CD8-positive, alpha-beta T cell (primary cell): ENCODE measurements at regions of chr5 and their contacts with region 1.

Region 1: GRCh38 chr5:140244525-140245025 is 58.3 kb downstream of the PFDN1 start:
- DNase-seq: peak; percentile 43 to 78 (median 75)
- ATAC-seq: peak; percentile 76
- H3K4me3 ChIP-seq: no peak overlapping the region
- H3K4me3 Mint-ChIP-seq: no peak overlapping the region
- H3K27ac ChIP-seq: no peak overlapping the region
- H3K27ac Mint-ChIP-seq: peak overlapping the region; percentile 20
- H3K4me1 ChIP-seq: peaks cover 10% of the 10 kb centered on the region
- H3K4me1 Mint-ChIP-seq: peaks cover 12% of the 10 kb centered on the region
- H3K27me3 ChIP-seq: no peaks in the 10 kb centered on the region
- H3K27me3 Mint-ChIP-seq: no peaks in the 10 kb centered on the region
- CTCF ChIP-seq: peak; percentile 73

Region 2: GRCh38 chr5:140174465-140175366 is 69.9 kb before region 1 on chr5 and contains the start of gene CYSTM1:
- CTCF ChIA-PET with region 1: no interaction called
- POLR2A ChIA-PET with region 1: no interaction called
- intact Hi-C with region 1: no loop called
- DNase-seq: peak; percentile 92 to 98 (median 96)
- ATAC-seq: peak; percentile 83
- H3K4me3 ChIP-seq: peak within 1 kb of the TSS; percentile 68 to 83
- H3K4me3 Mint-ChIP-seq: peak within 1 kb of the TSS; percentile 91
- H3K27ac ChIP-seq: peak within 1 kb of the TSS; percentile 79 to 88
- H3K27ac Mint-ChIP-seq: peak within 1 kb of the TSS; percentile 95
- H3K4me1 ChIP-seq: peaks cover 9% of the 10 kb centered on the region
- H3K4me1 Mint-ChIP-seq: peaks cover 13% of the 10 kb centered on the region
- H3K27me3 ChIP-seq: peaks cover 0 to 2% of the 10 kb centered on the region in 2 experiments
- H3K27me3 Mint-ChIP-seq: peaks cover 5% of the 10 kb centered on the region
- CTCF ChIP-seq: no peak
- total RNA-seq, gene CYSTM1: 8.1 to 8.6 TPM

Region 3: DNA sequence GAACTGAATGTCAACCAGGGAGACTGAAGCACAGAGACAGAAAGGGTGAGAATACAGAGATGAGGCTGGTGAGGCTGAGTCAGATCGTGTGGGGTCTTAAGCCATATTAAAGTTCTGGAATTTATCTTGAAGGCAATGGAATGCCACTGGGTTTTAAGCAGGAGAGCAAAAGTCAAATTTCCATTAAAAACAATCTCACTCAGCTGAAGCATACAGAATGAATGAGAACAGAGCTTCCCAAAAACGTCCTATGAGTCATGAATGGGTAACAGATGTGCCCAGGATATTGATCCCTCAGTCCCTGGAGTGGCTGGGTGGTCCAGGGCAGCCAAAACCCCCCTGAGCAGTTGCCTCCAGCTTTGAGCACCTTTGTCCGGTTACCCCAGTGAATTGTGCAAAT is 13.4 kb after region 1 on chr5:
- CTCF ChIA-PET with region 1: interaction called, 15 read pairs
- POLR2A ChIA-PET with region 1: no interaction called
- intact Hi-C with region 1: no loop called
- DNase-seq: no peak
- ATAC-seq: no peak
- H3K4me3 ChIP-seq: no peak overlapping the region
- H3K4me3 Mint-ChIP-seq: no peak overlapping the region
- H3K27ac ChIP-seq: no peak overlapping the region
- H3K27ac Mint-ChIP-seq: no peak overlapping the region
- H3K4me1 ChIP-seq: no peaks in the 10 kb centered on the region
- H3K4me1 Mint-ChIP-seq: peaks cover 30% of the 10 kb centered on the region
- H3K27me3 ChIP-seq: no peaks in the 10 kb centered on the region
- H3K27me3 Mint-ChIP-seq: no peaks in the 10 kb centered on the region
- CTCF ChIP-seq: no peak

Region 4: DNA sequence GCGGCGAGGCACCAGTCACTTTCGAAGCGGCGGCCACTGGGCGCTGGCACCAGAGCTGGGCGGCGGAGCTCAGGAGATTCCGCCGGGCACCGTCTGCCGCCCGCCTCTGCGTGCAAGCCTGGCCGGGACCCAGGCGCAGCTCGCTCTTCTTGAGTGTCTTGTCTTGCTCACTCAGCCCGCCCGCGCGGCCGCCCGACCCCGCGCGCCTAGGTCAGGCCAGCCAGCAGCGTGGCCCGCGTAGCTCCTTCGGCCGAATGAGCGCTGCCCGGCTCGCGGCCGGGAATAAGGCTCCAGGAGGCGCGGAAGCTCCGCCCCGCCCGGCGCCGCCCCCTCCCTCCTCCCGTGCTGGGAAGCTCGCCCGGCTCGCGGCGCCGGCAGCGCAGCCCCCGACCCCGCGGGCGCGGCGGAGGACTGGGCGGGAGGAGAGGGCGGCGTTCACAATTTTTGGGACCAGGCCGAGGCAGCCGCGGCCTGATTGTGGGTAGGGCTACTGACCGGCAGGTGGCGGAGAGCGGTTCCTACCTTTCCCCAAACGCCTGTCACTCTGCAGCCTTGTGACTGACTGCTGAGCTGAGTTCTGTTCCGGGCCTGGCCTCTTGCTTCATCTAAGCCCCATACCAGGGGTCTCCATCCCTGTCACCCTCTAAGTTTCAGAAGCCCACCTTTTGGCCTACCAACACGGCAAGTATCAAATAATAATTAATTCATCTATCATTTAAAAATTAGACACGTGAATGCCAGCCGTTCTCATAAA is 102.0 kb after region 1 on chr5 and contains the start of gene HBEGF:
- CTCF ChIA-PET with region 1: interaction called, 337 read pairs
- POLR2A ChIA-PET with region 1: interaction called, 4 read pairs
- intact Hi-C with region 1: loop called (anchors 1 kb)
- DNase-seq: peak in 8 of 9 experiments; percentile 21 to 66 (median 50)
- ATAC-seq: peak; percentile 73
- H3K4me3 ChIP-seq: peak within 1 kb of the TSS; percentile 48 to 50
- H3K4me3 Mint-ChIP-seq: peak within 1 kb of the TSS; percentile 72
- H3K27ac ChIP-seq: no peak within 1 kb of the TSS
- H3K27ac Mint-ChIP-seq: no peak within 1 kb of the TSS
- H3K4me1 ChIP-seq: peaks cover 23% of the 10 kb centered on the region
- H3K4me1 Mint-ChIP-seq: peaks cover 33% of the 10 kb centered on the region
- H3K27me3 ChIP-seq: peaks cover 0 to 13% of the 10 kb centered on the region in 2 experiments
- H3K27me3 Mint-ChIP-seq: peaks cover 27% of the 10 kb centered on the region
- CTCF ChIP-seq: peak; percentile 41
- total RNA-seq, gene HBEGF: 0.30 to 0.50 TPM

Region 5: DNA sequence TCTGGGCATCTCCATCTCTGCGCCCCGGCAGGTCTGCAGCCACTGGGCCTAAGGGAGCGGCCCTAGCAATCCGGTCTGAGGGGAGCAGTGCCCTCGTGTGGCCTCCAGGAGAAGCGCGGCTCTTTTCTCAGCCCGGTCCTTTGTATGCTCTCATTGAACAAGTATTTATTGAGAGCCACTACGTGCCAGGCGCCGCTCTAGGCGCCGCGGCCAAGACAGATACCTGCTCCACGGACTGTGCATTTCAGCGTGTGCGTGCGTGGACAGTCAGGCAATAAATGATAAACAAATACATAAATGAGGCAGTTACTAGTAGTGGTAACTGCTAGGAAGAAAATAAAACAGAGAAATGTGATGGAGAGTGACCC is 113.1 kb after region 1 on chr5:
- CTCF ChIA-PET with region 1: interaction called, 337 read pairs
- POLR2A ChIA-PET with region 1: no interaction called
- intact Hi-C with region 1: loop called in 1 of 2 experiments (anchors 1 kb)
- DNase-seq: peak; percentile 55 to 83 (median 67)
- ATAC-seq: peak; percentile 99
- H3K4me3 ChIP-seq: peak overlapping the region in 1 of 2 experiments; percentile 20
- H3K4me3 Mint-ChIP-seq: peak overlapping the region; percentile 64
- H3K27ac ChIP-seq: no peak overlapping the region
- H3K27ac Mint-ChIP-seq: no peak overlapping the region
- H3K4me1 ChIP-seq: peaks cover 9% of the 10 kb centered on the region
- H3K4me1 Mint-ChIP-seq: peaks cover 7% of the 10 kb centered on the region
- H3K27me3 ChIP-seq: no peaks in the 10 kb centered on the region
- H3K27me3 Mint-ChIP-seq: peaks cover 11% of the 10 kb centered on the region
- CTCF ChIP-seq: peak; percentile 77

Region 6: DNA sequence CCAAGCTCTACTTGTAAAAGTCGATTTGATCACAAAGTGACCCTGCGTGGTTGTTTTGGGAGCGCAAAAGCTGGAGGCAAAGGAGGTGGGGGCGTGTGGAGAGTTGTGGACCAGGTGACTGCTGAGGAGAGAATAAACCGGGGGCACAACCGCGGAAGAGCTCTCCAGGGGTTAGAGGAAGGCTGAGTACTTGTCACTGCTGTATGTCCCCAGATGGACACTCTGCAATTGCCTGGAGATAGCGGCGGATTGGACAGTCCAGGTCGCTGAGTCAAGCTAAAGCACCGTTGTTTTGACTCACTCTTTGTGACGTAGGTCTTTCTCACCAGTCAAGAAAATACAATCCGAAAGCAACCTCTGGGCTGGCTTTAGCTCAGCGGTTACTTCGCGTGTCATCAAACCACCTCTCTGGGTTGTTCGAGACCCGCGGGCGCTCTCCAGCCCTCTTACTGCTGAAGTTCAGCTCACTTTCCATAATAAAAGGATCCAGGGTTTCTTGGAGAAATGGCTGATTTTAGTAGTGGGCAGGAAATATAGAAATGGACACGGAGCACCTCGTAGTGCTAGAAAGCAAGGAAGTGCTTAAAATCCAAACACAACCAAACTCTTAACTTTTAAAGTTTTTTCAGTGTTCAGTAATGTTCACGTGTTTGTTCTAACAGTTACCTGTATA is 481.4 kb after region 1 on chr5:
- CTCF ChIA-PET with region 1: interaction called, 4 read pairs
- POLR2A ChIA-PET with region 1: no interaction called
- intact Hi-C with region 1: loop called in 1 of 2 experiments (anchors 2 kb)
- DNase-seq: peak; percentile 28 to 80 (median 61)
- ATAC-seq: peak; percentile 92
- H3K4me3 ChIP-seq: peak overlapping the region in 1 of 2 experiments; percentile 17
- H3K4me3 Mint-ChIP-seq: peak overlapping the region; percentile 80
- H3K27ac ChIP-seq: no peak overlapping the region
- H3K27ac Mint-ChIP-seq: peak overlapping the region; percentile 83
- H3K4me1 ChIP-seq: no peaks in the 10 kb centered on the region
- H3K4me1 Mint-ChIP-seq: peaks cover 12% of the 10 kb centered on the region
- H3K27me3 ChIP-seq: no peaks in the 10 kb centered on the region
- H3K27me3 Mint-ChIP-seq: peaks cover 24% of the 10 kb centered on the region
- CTCF ChIP-seq: no peak